WTC11 (cell line): ENCODE measurements at regions of chr15 and their contacts with region 1.

Region 1: DNA sequence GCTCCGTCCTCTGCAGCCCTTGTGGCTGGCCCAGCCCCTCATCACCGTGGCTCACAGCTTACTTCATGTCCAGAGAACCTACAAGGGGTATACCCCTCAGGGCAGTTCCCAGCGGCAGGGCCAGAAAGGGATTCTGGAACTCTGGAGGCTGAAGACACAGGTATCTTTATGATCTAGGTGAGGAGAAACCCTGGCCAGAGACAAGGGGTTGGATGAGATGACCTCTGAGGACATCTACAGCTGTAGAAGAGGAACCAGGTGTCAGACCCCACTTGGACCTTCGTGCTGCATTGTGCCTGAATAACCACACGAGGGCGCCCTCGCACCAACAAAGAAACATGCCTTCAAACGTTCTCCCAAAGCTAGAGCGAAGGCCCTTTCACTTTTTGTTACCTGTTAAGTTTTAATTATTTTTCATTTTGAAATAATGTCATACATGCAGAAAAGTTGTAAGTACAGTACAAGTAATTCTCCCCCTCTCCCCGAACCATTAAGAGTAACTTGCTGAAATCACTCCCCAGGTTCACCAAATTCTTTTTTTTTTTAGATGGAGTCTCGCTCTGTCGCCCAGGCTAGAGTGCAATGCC is 118.7 kb upstream of the SMAD3 start:
- DNase-seq: peak; percentile 74
- ATAC-seq: peak; percentile 73
- H3K4me3 Mint-ChIP-seq: no peak overlapping the region
- H3K27ac Mint-ChIP-seq: no peak overlapping the region
- H3K4me1 Mint-ChIP-seq: no peaks in the 10 kb centered on the region
- H3K27me3 Mint-ChIP-seq: no peaks in the 10 kb centered on the region
- CTCF ChIP-seq: peak; percentile 99

Region 2: GRCh38 chr15:66868918-66869317 is 77.8 kb before region 1 on chr15:
- CTCF ChIA-PET with region 1: no interaction called
- POLR2A ChIA-PET with region 1: no interaction called
- DNase-seq: no peak
- ATAC-seq: no peak
- H3K4me3 Mint-ChIP-seq: no peak overlapping the region
- H3K27ac Mint-ChIP-seq: no peak overlapping the region
- H3K4me1 Mint-ChIP-seq: peaks cover 8% of the 10 kb centered on the region
- H3K27me3 Mint-ChIP-seq: no peaks in the 10 kb centered on the region; the same call in 1 of the 2 replicates
- CTCF ChIP-seq: no peak

Region 3: GRCh38 chr15:66961407-66961884 is 14.8 kb after region 1 on chr15:
- CTCF ChIA-PET with region 1: interaction called, 12 read pairs
- POLR2A ChIA-PET with region 1: no interaction called
- DNase-seq: no peak
- ATAC-seq: no peak
- H3K4me3 Mint-ChIP-seq: no peak overlapping the region
- H3K27ac Mint-ChIP-seq: peak overlapping the region; percentile 5; the same call in 1 of the 2 replicates
- H3K4me1 Mint-ChIP-seq: peaks cover 9% of the 10 kb centered on the region
- H3K27me3 Mint-ChIP-seq: no peaks in the 10 kb centered on the region
- CTCF ChIP-seq: no peak

Region 4: GRCh38 chr15:67070892-67071664 is 124.4 kb after region 1 on chr15:
- CTCF ChIA-PET with region 1: interaction called, 13 read pairs
- POLR2A ChIA-PET with region 1: no interaction called
- DNase-seq: no peak
- ATAC-seq: peak; percentile 14; the same call in 1 of the 2 replicates
- H3K4me3 Mint-ChIP-seq: no peak overlapping the region
- H3K27ac Mint-ChIP-seq: peak overlapping the region; percentile 39
- H3K4me1 Mint-ChIP-seq: peaks cover 70% of the 10 kb centered on the region
- H3K27me3 Mint-ChIP-seq: peaks cover 11% of the 10 kb centered on the region
- CTCF ChIP-seq: no peak

Region 5: DNA sequence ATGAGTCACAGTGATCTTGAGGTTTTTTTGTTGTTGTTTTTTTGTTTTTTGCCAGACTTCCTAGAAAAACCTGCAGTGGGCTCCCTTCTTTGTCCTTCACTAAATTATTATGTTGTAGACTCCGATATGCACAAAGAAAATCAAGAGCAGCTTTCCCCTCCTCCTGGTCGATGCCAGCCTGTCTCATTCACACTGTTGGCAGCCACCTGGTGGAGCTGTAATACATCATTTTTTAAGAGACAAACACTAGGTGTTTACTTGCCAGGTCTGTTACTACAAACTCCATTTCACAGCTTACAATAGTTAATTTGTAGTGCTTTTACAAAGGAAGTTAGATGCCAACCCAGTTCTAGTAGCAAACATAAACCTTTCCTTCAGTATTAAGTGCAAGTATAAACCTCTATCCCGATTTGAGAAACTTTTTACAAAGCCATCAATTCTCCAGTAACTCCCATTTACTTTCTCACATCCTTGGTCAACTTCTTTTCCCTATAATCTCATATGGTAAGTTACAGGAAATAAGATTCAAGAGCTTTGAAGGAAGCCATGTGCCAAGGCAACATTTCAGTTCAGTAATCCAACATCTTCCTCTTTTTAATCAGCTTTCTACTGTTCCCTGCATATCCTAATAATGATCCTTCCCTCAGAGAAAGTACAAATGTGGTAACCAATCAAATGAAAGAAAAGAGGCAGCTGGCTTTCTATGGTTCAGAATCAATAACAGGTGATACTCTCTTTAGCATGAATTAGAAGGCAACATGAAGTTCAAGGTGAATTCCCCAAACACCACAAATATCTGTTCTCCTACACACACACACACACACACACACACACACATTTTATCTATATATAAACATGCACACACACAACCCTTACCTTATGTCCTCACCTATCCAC is 293.8 kb after region 1 on chr15:
- CTCF ChIA-PET with region 1: interaction called, 17 read pairs
- POLR2A ChIA-PET with region 1: no interaction called
- DNase-seq: no peak
- ATAC-seq: peak; percentile 60
- H3K4me3 Mint-ChIP-seq: no peak overlapping the region
- H3K27ac Mint-ChIP-seq: peak overlapping the region; percentile 28; the same call in 1 of the 2 replicates
- H3K4me1 Mint-ChIP-seq: peaks cover 34% of the 10 kb centered on the region
- H3K27me3 Mint-ChIP-seq: no peaks in the 10 kb centered on the region
- CTCF ChIP-seq: no peak